Transverse colon (tissue), 4 donors: ENCODE measurements at regions of chr3 and their contacts with region 1.

Region 1: DNA sequence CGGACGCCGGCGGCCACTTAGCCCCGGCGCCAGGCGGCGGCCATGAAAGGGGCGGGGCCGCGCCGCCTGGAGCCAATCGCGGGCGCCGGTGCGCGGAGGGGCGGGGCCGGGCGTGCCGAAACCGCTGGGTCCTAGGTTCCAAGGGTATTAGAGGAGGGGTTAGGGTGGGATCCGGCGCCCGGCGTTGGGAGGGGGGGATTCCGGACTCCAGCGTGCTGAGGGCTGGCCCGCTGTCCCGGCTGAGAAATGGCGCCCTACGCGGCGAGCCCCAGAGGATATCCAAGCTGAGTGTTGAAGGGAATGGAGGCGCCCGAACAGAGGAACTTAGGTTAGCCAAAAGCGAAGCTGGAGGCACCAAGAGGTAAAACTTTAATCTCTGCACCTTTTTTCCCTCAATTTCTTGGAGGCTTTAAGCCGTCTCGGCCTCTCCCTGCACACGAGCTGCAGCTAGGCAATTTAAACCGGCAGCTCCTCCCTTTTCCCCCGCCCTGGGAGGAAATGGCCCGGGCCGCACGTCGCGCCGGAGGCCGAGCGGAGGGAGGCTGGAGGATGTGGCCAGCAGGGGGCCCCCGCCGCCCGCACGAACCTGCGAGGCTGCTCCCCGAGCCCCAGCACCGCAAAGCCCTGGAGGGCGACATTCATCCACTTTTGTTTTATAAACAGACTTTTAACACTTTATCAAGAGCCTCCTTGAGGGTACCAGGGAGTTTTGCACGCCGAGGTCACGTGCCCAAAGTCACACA is at the start of gene XXYLT1:
- DNase-seq: peak; percentile 92
- H3K4me3 ChIP-seq: peak within 1 kb of the TSS; percentile 78 to 95 (median 92)
- H3K27ac ChIP-seq: peak within 1 kb of the TSS; percentile 91 to 98 (median 93)
- H3K4me1 ChIP-seq: peaks cover 14 to 30% (median 21%) of the 10 kb centered on the region in 4 donors
- H3K27me3 ChIP-seq: no peaks in the 10 kb centered on the region
- CTCF ChIP-seq: peak; percentile 91 to 98 (median 96)
- EP300 ChIP-seq: no peak
- POLR2A ChIP-seq: no peak
- total RNA-seq, gene XXYLT1: 3.0 to 10.0 (median 5.9) TPM

Region 2: DNA sequence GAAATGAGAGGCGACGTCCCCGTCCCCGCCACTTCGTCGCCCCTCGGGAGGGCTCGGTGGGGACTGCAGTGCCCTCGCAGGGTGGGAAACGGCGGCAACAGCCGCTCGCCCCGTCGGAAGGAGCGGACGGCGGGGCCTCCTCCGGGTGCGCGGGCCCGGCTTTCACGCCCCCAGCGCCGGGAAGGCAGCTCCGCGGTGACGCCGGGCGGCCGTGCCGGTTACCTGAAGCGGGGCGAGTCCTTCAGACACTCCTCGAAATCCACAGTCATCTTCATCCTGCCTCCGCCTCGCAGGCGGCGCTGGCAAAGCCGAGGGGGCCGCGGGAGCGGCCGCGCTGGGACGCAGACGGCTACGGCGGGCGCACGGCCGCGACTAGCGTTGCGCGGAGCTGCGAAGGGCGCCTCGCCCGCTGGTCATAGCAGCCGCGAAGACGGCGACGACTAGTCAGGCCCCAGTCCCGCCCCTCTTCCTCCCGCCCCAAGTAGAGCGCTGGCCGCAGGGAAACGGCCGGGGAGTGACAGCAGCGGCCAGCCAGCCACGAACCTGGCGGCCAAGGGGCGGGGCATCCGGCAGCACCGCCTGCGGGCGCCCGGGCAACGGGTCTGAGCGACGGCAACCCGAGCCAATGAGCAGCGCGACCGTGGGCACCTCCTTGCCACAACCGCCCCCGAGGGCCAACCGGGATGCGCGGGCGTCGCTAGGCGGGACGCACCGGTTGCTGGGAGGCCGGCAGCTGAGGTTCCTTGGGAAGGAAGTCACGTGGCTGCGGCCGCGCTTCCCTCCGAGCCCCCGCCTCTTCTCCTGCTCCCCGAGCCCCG is 171.5 kb after region 1 on chr3 and contains the start of gene ACAP2:
- in situ Hi-C with region 1: loop called in 1 of 4 experiments (anchors 10 kb)
- intact Hi-C with region 1: no loop called
- DNase-seq: peak; percentile 100
- H3K4me3 ChIP-seq: peak within 1 kb of the TSS; percentile 67 to 97 (median 88)
- H3K27ac ChIP-seq: peak within 1 kb of the TSS; percentile 97 to 99 (median 98)
- H3K4me1 ChIP-seq: peaks cover 7 to 50% (median 25%) of the 10 kb centered on the region in 4 donors
- H3K27me3 ChIP-seq: no peaks in the 10 kb centered on the region
- CTCF ChIP-seq: no peak
- EP300 ChIP-seq: no peak
- POLR2A ChIP-seq: peak; percentile 97
- total RNA-seq, gene ACAP2: 17.3 to 97.5 (median 64.6) TPM

Region 3: GRCh38 chr3:195522254-195523023 is 251.2 kb after region 1 on chr3:
- in situ Hi-C with region 1: loop called in 3 of 4 experiments (anchors 5 to 10 kb)
- intact Hi-C with region 1: no loop called
- DNase-seq: no peak
- H3K4me3 ChIP-seq: no peak overlapping the region
- H3K27ac ChIP-seq: no peak overlapping the region
- H3K4me1 ChIP-seq: peaks cover 0 to 2% (median 0%) of the 10 kb centered on the region in 4 donors
- H3K27me3 ChIP-seq: no peaks in the 10 kb centered on the region
- CTCF ChIP-seq: peak; percentile 72 to 91 (median 75)
- EP300 ChIP-seq: no peak
- POLR2A ChIP-seq: no peak

Region 4: DNA sequence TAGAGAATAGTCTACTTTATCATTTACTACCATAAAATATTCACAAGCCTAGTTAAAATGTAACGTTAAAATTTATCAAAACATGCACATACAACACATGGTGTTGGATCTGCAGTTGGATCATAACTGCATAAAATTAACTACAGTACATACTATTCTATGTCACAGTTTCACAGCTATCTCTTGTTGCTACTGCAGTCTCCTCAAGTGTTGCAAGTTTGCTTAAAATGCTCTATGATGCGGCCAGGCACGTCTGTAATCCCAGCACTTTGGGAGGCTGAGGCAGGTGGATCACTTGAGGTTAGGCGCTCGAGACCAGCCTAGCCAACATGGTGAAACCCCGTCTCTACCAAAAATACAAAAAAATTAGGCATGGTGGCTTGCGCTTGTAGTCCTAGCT is 261.5 kb after region 1 on chr3:
- in situ Hi-C with region 1: loop called in 3 of 4 experiments (anchors 5 to 10 kb)
- intact Hi-C with region 1: no loop called
- DNase-seq: no peak
- H3K4me3 ChIP-seq: no peak overlapping the region
- H3K27ac ChIP-seq: no peak overlapping the region
- H3K4me1 ChIP-seq: peaks cover 0 to 23% (median 2%) of the 10 kb centered on the region in 4 donors
- H3K27me3 ChIP-seq: no peaks in the 10 kb centered on the region
- CTCF ChIP-seq: no peak
- EP300 ChIP-seq: no peak
- POLR2A ChIP-seq: no peak